WTC11 (cell line): ENCODE measurements at regions of chr3 and their contacts with region 1.

Region 1: DNA sequence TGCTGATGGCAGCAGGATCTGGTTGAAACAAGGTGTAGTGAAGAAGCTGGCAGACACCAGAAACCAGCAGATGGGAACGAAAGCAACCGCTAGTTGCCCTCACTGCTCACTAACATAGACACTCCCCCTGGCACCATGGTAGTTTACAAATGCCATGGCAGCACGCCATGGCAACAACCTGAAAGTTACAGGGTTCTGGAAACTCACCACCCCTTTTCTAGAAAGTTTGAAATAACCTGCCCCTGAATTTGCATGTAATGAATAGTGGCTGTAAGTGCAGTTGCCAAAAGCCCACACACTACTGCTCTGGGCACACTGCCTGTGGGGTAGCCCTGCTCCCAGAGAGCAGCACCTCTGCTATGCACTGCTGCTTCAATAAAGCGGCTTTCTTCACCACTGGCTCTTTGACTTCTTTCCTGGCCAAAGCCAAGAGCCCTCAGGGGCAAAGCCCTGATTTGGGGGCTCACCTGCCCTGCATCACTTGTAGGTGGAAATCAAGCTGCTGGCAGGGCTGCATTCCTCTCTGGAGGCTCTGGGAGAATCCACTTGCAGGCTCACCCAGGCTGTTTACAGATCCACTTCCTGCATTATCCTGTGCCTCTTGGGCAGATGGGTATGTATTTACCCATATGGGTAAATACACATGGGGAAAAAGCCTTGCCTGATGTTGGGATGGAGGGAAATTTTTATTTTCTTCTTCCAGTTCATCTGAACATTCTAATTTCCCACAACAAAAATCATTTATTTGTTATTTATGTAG is 2.0 kb upstream of the GP9 start:
- DNase-seq: no peak
- ATAC-seq: no peak
- H3K4me3 Mint-ChIP-seq: no peak overlapping the region
- H3K27ac Mint-ChIP-seq: no peak overlapping the region
- H3K4me1 Mint-ChIP-seq: no peaks in the 10 kb centered on the region
- H3K27me3 Mint-ChIP-seq: peaks cover 5% of the 10 kb centered on the region
- CTCF ChIP-seq: no peak

Region 2: DNA sequence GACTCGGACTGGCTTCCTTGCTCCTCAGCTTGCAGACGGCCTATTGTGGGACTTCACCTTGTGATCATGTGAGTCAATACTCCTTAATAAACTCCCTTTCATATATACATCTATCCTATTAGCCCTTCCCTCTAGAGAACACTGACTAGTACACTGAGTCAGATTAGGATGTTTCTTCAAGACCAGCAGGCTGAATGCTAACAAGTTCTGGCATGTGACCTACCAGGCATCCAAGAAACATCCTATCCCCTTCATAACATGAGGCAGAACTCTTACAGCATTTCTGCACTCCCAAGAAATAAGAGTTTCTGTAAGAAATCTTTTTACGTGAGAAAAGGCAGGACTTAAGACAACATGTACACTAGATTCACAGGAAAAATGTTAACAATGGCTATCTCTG is 74.0 kb before region 1 on chr3:
- CTCF ChIA-PET with region 1: interaction called, 10 read pairs
- POLR2A ChIA-PET with region 1: no interaction called
- DNase-seq: no peak
- ATAC-seq: no peak
- H3K4me3 Mint-ChIP-seq: no peak overlapping the region
- H3K27ac Mint-ChIP-seq: no peak overlapping the region
- H3K4me1 Mint-ChIP-seq: peaks cover 7% of the 10 kb centered on the region
- H3K27me3 Mint-ChIP-seq: peaks cover 2% of the 10 kb centered on the region; the same call in 1 of the 2 replicates
- CTCF ChIP-seq: no peak